CD14-positive monocyte (primary cell): ENCODE measurements at regions of chr21 and their contacts with region 1.

Region 1: GRCh38 chr21:31198575-31198974 is 145.5 kb downstream of the TIAM1 start:
- DNase-seq: peak; percentile 23 to 60 (median 39)
- H3K4me3 ChIP-seq: no peak overlapping the region
- H3K4me3 Mint-ChIP-seq: no peak overlapping the region
- H3K27ac ChIP-seq: peak overlapping the region in 1 of 2 donors; percentile 29
- H3K27ac Mint-ChIP-seq: peak overlapping the region in 2 of 7 donors; percentile 46 to 69
- H3K4me1 ChIP-seq: peaks cover 47 to 55% of the 10 kb centered on the region in 2 donors
- H3K4me1 Mint-ChIP-seq: peaks cover 46% of the 10 kb centered on the region
- H3K27me3 ChIP-seq: no peaks in the 10 kb centered on the region
- H3K27me3 Mint-ChIP-seq: peaks cover 0 to 2% (median 1%) of the 10 kb centered on the region in 3 donors
- CTCF ChIP-seq: peak; percentile 76

Region 2: DNA sequence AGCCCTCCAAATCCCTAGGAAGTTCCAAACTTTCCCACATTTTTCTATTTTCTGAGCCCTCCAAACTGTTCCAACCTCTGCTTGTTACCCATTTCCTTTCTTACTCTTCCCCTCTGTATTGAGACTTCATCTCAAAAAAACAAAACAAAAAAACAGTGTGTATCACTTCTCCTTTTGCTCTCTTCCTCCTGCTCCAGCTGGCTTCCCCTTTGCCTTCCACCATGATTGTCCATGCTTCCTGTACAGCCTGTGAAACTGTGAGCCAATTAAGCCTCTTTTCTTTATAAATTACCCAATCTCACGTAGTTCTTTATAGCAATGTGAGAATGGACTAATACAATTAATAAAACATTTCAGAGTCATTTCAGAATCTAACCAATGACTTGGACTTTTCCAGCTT is 90.7 kb before region 1 on chr21:
- intact Hi-C with region 1: loop called in 1 of 2 experiments (anchors 5 kb)
- DNase-seq: peak; percentile 67 to 80 (median 76)
- H3K4me3 ChIP-seq: peak overlapping the region in 1 of 3 experiments; percentile 38
- H3K4me3 Mint-ChIP-seq: peak overlapping the region in 1 of 2 donors; percentile 18
- H3K27ac ChIP-seq: peak overlapping the region; percentile 60 to 80
- H3K27ac Mint-ChIP-seq: peak overlapping the region; percentile 76 to 95 (median 88)
- H3K4me1 ChIP-seq: peaks cover 54 to 68% of the 10 kb centered on the region in 2 donors
- H3K4me1 Mint-ChIP-seq: peaks cover 70% of the 10 kb centered on the region
- H3K27me3 ChIP-seq: no peaks in the 10 kb centered on the region
- H3K27me3 Mint-ChIP-seq: peaks cover 0 to 3% (median 0%) of the 10 kb centered on the region in 3 donors
- CTCF ChIP-seq: no peak

Region 3: GRCh38 chr21:31343680-31344480 is 145.3 kb after region 1 on chr21 and contains the start of gene TIAM1:
- intact Hi-C with region 1: loop called in 1 of 2 experiments (anchors 5 kb)
- DNase-seq: peak; percentile 70 to 75 (median 75)
- H3K4me3 ChIP-seq: peak within 1 kb of the TSS; percentile 79 to 92 (median 84)
- H3K4me3 Mint-ChIP-seq: peak within 1 kb of the TSS; percentile 99
- H3K27ac ChIP-seq: peak within 1 kb of the TSS; percentile 21 to 82
- H3K27ac Mint-ChIP-seq: peak within 1 kb of the TSS; percentile 84 to 96 (median 93)
- H3K4me1 ChIP-seq: peaks cover 50 to 60% of the 10 kb centered on the region in 2 donors
- H3K4me1 Mint-ChIP-seq: peaks cover 59% of the 10 kb centered on the region
- H3K27me3 ChIP-seq: peaks cover 0 to 25% of the 10 kb centered on the region in 2 donors
- H3K27me3 Mint-ChIP-seq: peaks cover 17 to 22% (median 18%) of the 10 kb centered on the region in 3 donors
- CTCF ChIP-seq: no peak
- polyA plus RNA-seq, gene TIAM1: 17.7 to 55.0 (median 45.3) TPM

Region 4: GRCh38 chr21:31580866-31581276 is 382.3 kb after region 1 on chr21:
- intact Hi-C with region 1: loop called (anchors 2 to 5 kb)
- DNase-seq: peak; percentile 44 to 65 (median 59)
- H3K4me3 ChIP-seq: no peak overlapping the region
- H3K4me3 Mint-ChIP-seq: no peak overlapping the region
- H3K27ac ChIP-seq: no peak overlapping the region
- H3K27ac Mint-ChIP-seq: no peak overlapping the region
- H3K4me1 ChIP-seq: peaks cover 9 to 12% of the 10 kb centered on the region in 2 donors
- H3K4me1 Mint-ChIP-seq: peaks cover 16% of the 10 kb centered on the region
- H3K27me3 ChIP-seq: no peaks in the 10 kb centered on the region
- H3K27me3 Mint-ChIP-seq: peaks cover 0 to 6% (median 2%) of the 10 kb centered on the region in 3 donors
- CTCF ChIP-seq: peak; percentile 93

Region 5: DNA sequence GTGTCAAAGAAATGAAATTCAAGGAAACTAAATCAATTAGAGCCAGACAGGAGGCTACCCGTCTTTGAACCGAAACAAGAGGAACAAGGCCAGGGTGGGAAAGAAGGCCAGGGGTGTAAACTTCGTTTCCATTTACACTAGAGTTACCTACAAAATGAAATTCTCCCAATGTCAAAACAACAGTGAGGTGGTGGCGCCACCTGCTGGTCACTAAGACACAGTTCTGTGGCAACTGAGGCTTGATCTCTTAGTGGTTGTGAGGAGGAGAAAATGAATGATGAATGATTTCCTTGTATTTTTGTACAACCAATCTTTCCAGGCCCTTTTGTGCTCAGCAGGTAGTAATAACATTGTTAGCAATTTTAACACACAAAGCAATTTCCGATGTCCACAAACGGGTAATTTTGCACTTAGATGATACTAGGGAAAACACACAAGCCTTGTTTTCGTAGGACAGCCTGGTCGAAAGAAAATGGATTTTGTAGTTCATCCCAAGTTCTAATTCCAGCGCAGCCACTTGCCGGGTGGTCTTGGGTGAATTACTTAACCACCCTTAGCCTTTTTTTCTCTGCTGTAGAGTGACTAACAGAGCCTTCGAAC is 406.1 kb after region 1 on chr21:
- intact Hi-C with region 1: loop called in 1 of 2 experiments (anchors 5 kb)
- DNase-seq: peak; percentile 49 to 75 (median 67)
- H3K4me3 ChIP-seq: no peak overlapping the region
- H3K4me3 Mint-ChIP-seq: no peak overlapping the region
- H3K27ac ChIP-seq: no peak overlapping the region
- H3K27ac Mint-ChIP-seq: peak overlapping the region in 1 of 7 donors; percentile 33
- H3K4me1 ChIP-seq: no peaks in the 10 kb centered on the region
- H3K4me1 Mint-ChIP-seq: peaks cover 5% of the 10 kb centered on the region
- H3K27me3 ChIP-seq: no peaks in the 10 kb centered on the region
- H3K27me3 Mint-ChIP-seq: peaks cover 0 to 7% (median 2%) of the 10 kb centered on the region in 3 donors
- CTCF ChIP-seq: peak; percentile 89